SK-N-SH (cell line): ENCODE measurements at regions of chr11 and their contacts with region 1.

Region 1: DNA sequence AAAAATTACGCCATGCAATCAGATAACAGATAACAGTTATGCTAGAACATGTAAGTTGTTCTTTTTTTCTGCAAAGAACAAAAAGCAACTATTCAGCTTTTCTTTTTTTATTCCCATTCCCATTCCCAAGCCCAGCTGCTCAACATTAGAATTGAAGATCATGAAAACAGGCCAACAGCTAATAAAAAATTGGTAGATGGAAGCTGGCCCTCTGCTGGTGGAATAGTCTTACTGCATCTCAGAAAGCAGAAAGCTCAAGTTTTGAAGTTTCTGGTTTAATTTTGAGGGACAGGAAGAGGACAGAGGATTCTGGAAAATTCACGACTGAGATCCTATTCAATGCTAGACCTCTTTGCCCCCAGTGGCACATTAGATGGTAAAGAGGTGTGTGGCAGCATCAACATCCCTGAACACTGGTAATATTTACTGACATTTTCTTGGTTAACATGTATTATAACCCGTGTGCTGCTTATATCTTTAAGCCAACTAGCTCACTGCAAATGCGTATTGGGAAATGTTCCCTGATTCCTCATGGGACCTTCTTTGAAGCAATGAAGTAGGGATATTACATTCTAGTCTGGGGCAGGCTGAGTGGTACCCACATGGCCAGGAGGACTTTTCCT is 591.2 kb downstream of the OPCML start:
- DNase-seq: peak; percentile 56
- H3K4me3 ChIP-seq: no peak overlapping the region; a peak in 1 of 4 replicates
- H3K27ac ChIP-seq: no peak overlapping the region
- H3K4me1 ChIP-seq: peaks cover 0 to 2% of the 10 kb centered on the region in 2 experiments; a peak in 1 of 4 replicates
- H3K27me3 ChIP-seq: peaks cover 4% of the 10 kb centered on the region; the same call in 1 of the 2 replicates
- CTCF ChIP-seq: peak; percentile 88
- EP300 ChIP-seq: no peak
- RAD21 ChIP-seq: peak; percentile 82

Region 2: GRCh38 chr11:132114185-132114584 is 827.0 kb before region 1 on chr11:
- CTCF ChIA-PET with region 1: interaction called, 19 read pairs
- POLR2A ChIA-PET with region 1: no interaction called
- DNase-seq: peak; percentile 60
- H3K4me3 ChIP-seq: no peak overlapping the region
- H3K27ac ChIP-seq: no peak overlapping the region
- H3K4me1 ChIP-seq: peaks cover 0 to 22% of the 10 kb centered on the region in 2 experiments; a peak in 1 of 4 replicates
- H3K27me3 ChIP-seq: no peaks in the 10 kb centered on the region
- CTCF ChIP-seq: peak; percentile 53
- EP300 ChIP-seq: no peak
- RAD21 ChIP-seq: peak; percentile 70

Region 3: DNA sequence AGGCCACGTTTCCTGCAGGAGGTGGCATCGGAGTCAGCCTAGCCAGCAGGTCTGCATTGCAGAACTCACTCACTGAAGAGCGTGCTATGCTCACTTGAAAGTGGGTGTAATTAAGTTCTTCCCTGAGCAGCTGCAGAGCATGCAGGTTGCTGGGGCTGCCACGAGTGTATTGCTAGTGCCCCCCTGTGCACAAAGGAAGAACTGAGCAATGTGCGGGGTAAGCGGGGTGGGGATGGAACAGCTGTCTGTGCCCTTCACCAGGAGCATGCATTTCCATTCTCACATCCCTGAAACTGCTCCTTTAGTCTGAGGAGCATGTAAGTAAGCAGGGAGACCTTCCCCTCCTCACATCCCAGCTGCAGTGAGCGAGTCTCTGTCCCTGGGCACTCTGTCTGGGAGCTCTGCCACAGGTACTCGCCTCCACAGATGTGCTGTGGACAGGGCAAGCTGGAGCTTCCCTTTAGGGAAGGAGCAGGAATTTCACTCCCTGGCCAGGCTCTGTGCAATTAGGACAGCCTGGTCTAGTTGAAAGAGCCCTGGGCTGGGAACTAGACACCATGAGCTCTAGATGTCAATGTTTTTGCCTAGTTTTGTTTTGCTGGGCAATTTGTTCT is 539.0 kb before region 1 on chr11:
- CTCF ChIA-PET with region 1: interaction called, 10 read pairs
- POLR2A ChIA-PET with region 1: no interaction called
- DNase-seq: peak; percentile 69
- H3K4me3 ChIP-seq: no peak overlapping the region
- H3K27ac ChIP-seq: no peak overlapping the region
- H3K4me1 ChIP-seq: no peaks in the 10 kb centered on the region; a peak in 1 of 4 replicates
- H3K27me3 ChIP-seq: no peaks in the 10 kb centered on the region
- CTCF ChIP-seq: peak; percentile 52
- EP300 ChIP-seq: no peak
- RAD21 ChIP-seq: peak; percentile 79

Region 4: DNA sequence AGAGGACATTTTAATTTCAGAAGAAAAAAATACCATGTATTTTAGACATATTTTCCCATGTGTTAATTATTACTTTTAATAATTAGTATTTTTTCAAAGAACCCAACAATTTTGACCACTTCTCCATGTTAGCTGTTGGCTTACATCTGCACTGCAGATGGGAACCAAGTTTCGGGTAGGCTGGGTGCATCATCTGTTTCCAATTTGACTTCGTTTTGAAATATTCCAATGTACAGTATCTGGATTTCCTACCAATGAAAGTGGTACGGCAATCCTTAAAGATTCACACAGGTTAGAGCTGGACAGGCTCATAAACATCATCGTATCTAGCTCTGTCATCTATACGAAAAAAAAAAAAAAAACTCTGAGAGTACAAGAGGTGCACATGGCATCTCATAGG is 79.0 kb before region 1 on chr11:
- CTCF ChIA-PET with region 1: interaction called, 10 read pairs
- POLR2A ChIA-PET with region 1: no interaction called
- DNase-seq: peak; percentile 48
- H3K4me3 ChIP-seq: no peak overlapping the region
- H3K27ac ChIP-seq: no peak overlapping the region
- H3K4me1 ChIP-seq: peaks cover 0 to 9% of the 10 kb centered on the region in 2 experiments; a peak in 2 of 4 replicates
- H3K27me3 ChIP-seq: no peaks in the 10 kb centered on the region
- CTCF ChIP-seq: no peak
- EP300 ChIP-seq: no peak
- RAD21 ChIP-seq: no peak

Region 5: DNA sequence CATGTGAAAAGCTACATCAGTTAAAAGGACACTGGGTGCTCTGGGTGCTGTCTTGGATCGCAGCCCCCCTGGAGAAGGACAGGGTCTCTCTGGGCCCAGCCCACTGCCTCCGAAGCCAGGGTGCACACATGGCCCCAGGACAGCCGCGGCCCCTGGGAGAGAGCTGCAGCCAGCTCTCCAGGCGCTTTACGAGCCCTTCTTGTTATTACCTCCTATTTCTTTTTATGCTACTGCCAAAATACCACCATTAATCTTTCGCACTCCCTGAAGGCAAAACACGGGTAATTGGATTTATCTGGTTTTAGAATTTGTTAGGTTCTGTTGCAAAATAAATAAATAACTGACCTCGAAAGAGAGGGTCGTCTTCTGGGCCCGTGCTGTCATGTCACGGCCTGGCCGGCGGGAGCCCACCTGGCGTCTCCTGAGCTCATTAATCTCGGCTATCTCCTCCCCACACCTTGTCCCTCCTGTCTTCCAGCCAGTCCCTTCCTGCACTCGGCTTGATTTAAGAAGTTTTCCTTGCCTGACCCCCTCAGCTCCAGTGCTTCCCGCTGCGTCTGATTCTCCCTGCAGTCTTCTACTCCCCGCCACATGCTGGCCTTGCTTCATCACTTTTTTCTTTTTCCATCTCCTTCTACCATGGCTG is 20.6 kb before region 1 on chr11:
- CTCF ChIA-PET with region 1: interaction called, 17 read pairs
- POLR2A ChIA-PET with region 1: no interaction called
- DNase-seq: no peak
- H3K4me3 ChIP-seq: no peak overlapping the region
- H3K27ac ChIP-seq: no peak overlapping the region
- H3K4me1 ChIP-seq: no peaks in the 10 kb centered on the region
- H3K27me3 ChIP-seq: no peaks in the 10 kb centered on the region
- CTCF ChIP-seq: no peak
- EP300 ChIP-seq: no peak
- RAD21 ChIP-seq: no peak

Region 6: DNA sequence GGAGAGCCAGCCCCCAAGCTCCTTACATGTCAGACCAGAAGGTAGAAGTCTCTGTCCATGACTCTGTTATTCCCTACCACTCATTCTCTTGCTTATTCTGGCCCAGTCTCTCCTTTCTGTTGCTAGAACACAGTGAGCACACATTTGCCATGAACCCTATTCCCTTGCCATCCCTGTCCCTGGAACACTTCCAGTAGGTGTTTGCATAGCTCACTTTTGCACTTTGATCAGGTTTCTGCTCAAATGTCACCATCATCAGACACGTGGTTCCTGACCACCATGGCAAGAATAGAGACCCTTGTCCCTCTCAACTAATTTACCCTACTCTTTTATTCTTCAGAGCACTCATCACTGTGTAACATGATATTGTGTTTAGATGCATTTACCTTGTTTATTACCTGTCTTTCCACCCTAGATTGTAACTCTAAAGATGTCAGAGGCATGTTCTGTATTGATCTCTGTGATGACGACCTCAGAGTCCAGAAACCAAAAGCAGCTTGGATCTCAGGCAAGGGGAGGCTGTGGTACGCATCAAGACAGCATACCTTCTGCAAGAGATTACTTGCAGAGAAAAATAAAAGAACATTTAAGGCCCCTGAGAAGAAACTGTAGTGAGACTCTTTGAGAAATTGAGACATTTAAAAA is 15.2 kb before region 1 on chr11:
- CTCF ChIA-PET with region 1: interaction called, 17 read pairs
- POLR2A ChIA-PET with region 1: no interaction called
- DNase-seq: no peak
- H3K4me3 ChIP-seq: no peak overlapping the region
- H3K27ac ChIP-seq: no peak overlapping the region
- H3K4me1 ChIP-seq: no peaks in the 10 kb centered on the region
- H3K27me3 ChIP-seq: no peaks in the 10 kb centered on the region
- CTCF ChIP-seq: no peak
- EP300 ChIP-seq: no peak
- RAD21 ChIP-seq: no peak

Region 7: DNA sequence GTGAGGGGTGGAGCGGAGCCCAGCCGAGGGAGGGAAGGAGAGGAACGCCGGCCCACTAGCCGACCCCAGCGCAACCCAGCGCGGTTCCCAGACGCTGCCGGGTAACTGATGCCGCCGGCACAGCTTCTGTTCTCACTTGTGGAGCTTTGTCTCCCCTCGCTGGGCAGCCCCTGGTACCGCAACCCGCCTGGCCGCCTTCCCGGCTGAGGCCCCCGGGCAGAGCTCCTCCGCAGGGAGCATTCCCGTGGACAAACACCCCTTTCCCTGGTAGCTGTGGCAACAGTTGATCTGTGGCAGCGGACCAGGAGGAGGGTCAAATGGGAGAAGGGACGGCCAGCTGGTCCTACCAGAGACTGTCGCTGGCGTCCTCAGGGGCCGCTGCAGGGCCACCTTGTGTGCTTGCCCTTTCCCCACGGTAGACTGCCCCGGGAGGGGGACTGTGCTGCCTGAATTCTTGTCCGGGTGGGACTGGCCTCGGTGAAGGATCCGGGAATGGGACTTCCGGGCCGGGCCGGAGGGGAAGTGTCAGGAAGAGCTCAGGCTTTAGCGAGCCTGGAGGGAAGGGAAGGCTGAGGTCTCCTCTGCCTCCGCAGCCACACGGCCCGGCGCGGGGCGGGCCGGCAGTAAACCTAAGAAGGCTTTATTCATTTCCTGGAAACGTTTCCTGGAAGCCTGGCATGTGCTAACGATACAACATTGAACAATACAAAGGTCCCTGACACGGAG is 123.2 kb after region 1 on chr11:
- CTCF ChIA-PET with region 1: interaction called, 23 read pairs
- POLR2A ChIA-PET with region 1: no interaction called
- DNase-seq: peak; percentile 91
- H3K4me3 ChIP-seq: peak overlapping the region; percentile 19 to 44; a peak in 2 of 4 replicates
- H3K27ac ChIP-seq: no peak overlapping the region
- H3K4me1 ChIP-seq: peaks cover 0 to 3% of the 10 kb centered on the region in 2 experiments; a peak in 1 of 4 replicates
- H3K27me3 ChIP-seq: no peaks in the 10 kb centered on the region
- CTCF ChIP-seq: peak; percentile 32
- EP300 ChIP-seq: no peak
- RAD21 ChIP-seq: peak; percentile 84

Region 8: GRCh38 chr11:133181066-133181465 is 239.9 kb after region 1 on chr11:
- CTCF ChIA-PET with region 1: no interaction called
- POLR2A ChIA-PET with region 1: no interaction called
- DNase-seq: no peak
- H3K4me3 ChIP-seq: no peak overlapping the region
- H3K27ac ChIP-seq: no peak overlapping the region
- H3K4me1 ChIP-seq: no peaks in the 10 kb centered on the region
- H3K27me3 ChIP-seq: no peaks in the 10 kb centered on the region
- CTCF ChIP-seq: no peak
- EP300 ChIP-seq: no peak
- RAD21 ChIP-seq: no peak